ENCODE measurements at regions of chr16 and their contacts with region 1.

Region 1: GRCh38 chr16:85253084-85253941 is 141.0 kb upstream of the CIBAR2 start:
- DNase-seq: peak in 1 of 2 experiments; percentile 95
- H3K4me3 ChIP-seq: no peak overlapping the region
- H3K27ac ChIP-seq: peak overlapping the region; percentile 14; the same call in 1 of the 2 replicates
- H3K4me1 ChIP-seq: peaks cover 0 to 11% (median 2%) of the 10 kb centered on the region in 4 experiments; a peak in 4 of 7 replicates
- H3K27me3 ChIP-seq: no peaks in the 10 kb centered on the region
- CTCF ChIP-seq: peak; percentile 96 to 99 (median 98)
- EP300 ChIP-seq: no peak
- POLR2A ChIP-seq: no peak
- RAD21 ChIP-seq: peak; percentile 65 to 81

Region 2: GRCh38 chr16:84933774-84934631 is 319.3 kb before region 1 on chr16:
- CTCF ChIA-PET with region 1: no interaction called
- POLR2A ChIA-PET with region 1: no interaction called
- DNase-seq: no peak
- H3K4me3 ChIP-seq: no peak overlapping the region
- H3K27ac ChIP-seq: no peak overlapping the region
- H3K4me1 ChIP-seq: no peaks in the 10 kb centered on the region
- H3K27me3 ChIP-seq: no peaks in the 10 kb centered on the region
- CTCF ChIP-seq: no peak
- EP300 ChIP-seq: no peak
- POLR2A ChIP-seq: no peak
- RAD21 ChIP-seq: no peak

Region 3: GRCh38 chr16:85162478-85163277 is 90.6 kb before region 1 on chr16:
- CTCF ChIA-PET with region 1: interaction called, 12 read pairs
- POLR2A ChIA-PET with region 1: no interaction called
- DNase-seq: no peak
- H3K4me3 ChIP-seq: no peak overlapping the region
- H3K27ac ChIP-seq: no peak overlapping the region
- H3K4me1 ChIP-seq: peaks cover under 1 to 22% (median 18%) of the 10 kb centered on the region in 4 experiments
- H3K27me3 ChIP-seq: no peaks in the 10 kb centered on the region; a peak in 1 of 7 replicates
- CTCF ChIP-seq: no peak
- EP300 ChIP-seq: no peak
- POLR2A ChIP-seq: no peak
- RAD21 ChIP-seq: no peak

Region 4: DNA sequence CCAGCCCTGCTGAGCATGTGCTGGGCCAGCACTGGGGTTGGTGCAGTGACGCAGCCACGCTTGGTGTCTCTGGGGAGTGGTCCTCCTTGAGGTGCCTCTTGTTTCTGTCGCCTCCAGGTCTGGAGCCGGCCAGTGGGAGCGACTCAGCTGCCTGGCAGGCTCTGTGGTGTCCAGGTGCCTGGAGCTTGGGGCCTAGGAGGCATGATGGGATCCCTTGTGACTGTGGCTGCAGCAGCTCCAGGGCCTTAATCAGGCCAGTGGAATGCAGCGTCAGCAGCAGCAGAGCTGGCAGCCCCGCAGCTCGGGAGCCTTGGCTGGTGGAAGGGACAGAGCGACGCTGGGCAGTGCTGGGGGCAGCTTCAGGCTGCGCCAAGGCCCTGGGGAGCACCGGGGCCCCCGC is 66.3 kb before region 1 on chr16:
- CTCF ChIA-PET with region 1: interaction called, 19 read pairs
- POLR2A ChIA-PET with region 1: no interaction called
- DNase-seq: no peak
- H3K4me3 ChIP-seq: no peak overlapping the region
- H3K27ac ChIP-seq: no peak overlapping the region
- H3K4me1 ChIP-seq: peaks cover 0 to 3% (median under 1%) of the 10 kb centered on the region in 4 experiments; a peak in 5 of 7 replicates
- H3K27me3 ChIP-seq: no peaks in the 10 kb centered on the region
- CTCF ChIP-seq: no peak
- EP300 ChIP-seq: no peak
- POLR2A ChIP-seq: no peak
- RAD21 ChIP-seq: no peak

Region 5: GRCh38 chr16:85270374-85270773 is 17.1 kb after region 1 on chr16:
- CTCF ChIA-PET with region 1: interaction called, 66 read pairs
- POLR2A ChIA-PET with region 1: interaction called, 3 read pairs
- DNase-seq: no peak
- H3K4me3 ChIP-seq: no peak overlapping the region
- H3K27ac ChIP-seq: no peak overlapping the region
- H3K4me1 ChIP-seq: no peaks in the 10 kb centered on the region; a peak in 4 of 7 replicates
- H3K27me3 ChIP-seq: peaks cover 0 to 3% (median 0%) of the 10 kb centered on the region in 4 experiments; a peak in 2 of 7 replicates
- CTCF ChIP-seq: no peak
- EP300 ChIP-seq: no peak
- POLR2A ChIP-seq: no peak
- RAD21 ChIP-seq: no peak

Region 6: DNA sequence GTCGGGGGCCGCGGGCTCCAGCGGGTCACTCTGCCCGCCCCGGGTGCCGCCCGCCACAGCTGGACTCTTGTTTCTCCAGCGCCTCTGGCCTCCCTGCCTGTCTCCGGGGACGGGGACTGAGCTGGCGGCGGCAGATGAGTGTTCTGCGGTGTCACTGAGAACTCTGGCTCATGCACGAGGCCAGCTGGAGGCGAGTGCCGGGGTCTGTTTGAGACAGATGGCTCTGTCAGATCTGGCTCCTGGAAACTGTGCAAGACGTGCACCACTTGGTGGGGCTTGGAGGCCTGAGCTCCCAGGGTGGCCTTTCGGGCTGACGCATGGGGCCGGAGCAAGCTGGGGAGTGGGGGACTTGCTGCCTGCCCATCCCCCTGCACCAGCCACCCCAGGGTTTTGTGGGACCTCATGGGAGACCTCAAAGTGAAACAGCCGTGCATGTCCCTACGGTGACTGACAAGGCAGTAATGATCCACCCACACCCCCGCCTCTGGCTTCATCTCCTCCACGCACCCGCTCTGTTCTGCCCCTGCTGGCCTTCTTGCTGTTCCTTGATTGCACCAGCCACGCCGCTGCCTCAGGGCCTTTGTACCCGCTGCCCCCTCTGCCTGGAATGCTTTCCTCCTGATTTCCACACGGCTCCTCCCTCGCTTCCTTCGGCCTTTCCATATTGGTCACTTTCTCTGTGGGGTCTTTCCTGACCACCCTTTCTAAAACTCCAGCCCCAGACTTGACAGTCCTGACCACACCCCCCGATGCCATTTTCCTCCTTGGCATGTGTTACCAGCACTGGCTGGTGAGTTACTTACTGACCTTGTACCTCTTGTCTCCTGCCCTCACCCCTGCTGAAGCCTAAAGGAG is 33.9 kb after region 1 on chr16:
- CTCF ChIA-PET with region 1: interaction called, 25 read pairs
- POLR2A ChIA-PET with region 1: no interaction called
- DNase-seq: no peak
- H3K4me3 ChIP-seq: no peak overlapping the region
- H3K27ac ChIP-seq: no peak overlapping the region
- H3K4me1 ChIP-seq: peaks cover 0 to 12% (median 2%) of the 10 kb centered on the region in 4 experiments; a peak in 5 of 7 replicates
- H3K27me3 ChIP-seq: no peaks in the 10 kb centered on the region
- CTCF ChIP-seq: peak in 1 of 3 experiments; percentile 3; a peak in 1 of 4 replicates
- EP300 ChIP-seq: no peak
- POLR2A ChIP-seq: no peak
- RAD21 ChIP-seq: no peak

Region 7: GRCh38 chr16:85305996-85306792 is 52.9 kb after region 1 on chr16:
- CTCF ChIA-PET with region 1: interaction called, 18 read pairs
- POLR2A ChIA-PET with region 1: no interaction called
- DNase-seq: no peak
- H3K4me3 ChIP-seq: no peak overlapping the region
- H3K27ac ChIP-seq: no peak overlapping the region
- H3K4me1 ChIP-seq: peaks cover 3 to 27% (median 23%) of the 10 kb centered on the region in 4 experiments
- H3K27me3 ChIP-seq: 0 out of 7 replicates have a peak, but pooled peaks cover 0 to 4% (median 0%) of the 10 kb centered on the region in 4 experiments
- CTCF ChIP-seq: no peak
- EP300 ChIP-seq: no peak
- POLR2A ChIP-seq: no peak
- RAD21 ChIP-seq: no peak

Region 8: DNA sequence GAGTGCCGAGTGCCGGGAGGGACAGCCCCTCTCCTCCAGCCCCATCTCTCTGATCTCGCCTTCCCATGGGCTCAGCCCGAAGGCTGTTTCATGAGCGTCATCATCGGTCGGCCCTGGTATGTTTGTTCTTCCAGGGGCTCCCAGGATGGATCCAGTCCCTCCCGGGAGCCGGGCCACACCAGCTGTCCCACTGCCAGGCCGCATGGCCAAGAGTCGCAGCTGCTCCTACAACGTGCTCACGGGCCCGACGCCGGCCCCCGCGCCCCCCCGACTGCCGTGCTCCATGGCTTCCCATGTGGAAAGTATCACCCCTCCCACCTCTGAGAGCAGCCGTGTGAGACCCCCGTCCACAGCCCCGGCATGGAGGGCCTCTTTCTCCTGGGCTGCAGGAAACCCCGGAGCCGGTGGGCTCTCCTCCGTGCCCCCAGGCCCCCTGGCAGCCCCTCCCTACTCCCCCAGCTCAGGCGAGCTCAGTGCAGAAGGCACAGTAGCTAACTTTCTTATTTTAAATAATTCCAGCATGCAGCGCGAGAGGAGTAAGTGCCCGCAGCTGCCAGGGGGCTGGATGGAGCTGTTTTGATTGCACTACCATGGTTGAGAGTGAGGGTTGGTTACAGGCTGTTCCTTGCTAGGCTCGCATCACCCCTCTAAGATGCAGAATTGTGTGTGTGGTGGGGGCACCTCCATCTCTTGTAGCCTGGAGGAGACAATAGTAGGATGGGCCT is 333.2 kb after region 1 on chr16:
- CTCF ChIA-PET with region 1: no interaction called
- POLR2A ChIA-PET with region 1: no interaction called
- DNase-seq: no peak
- H3K4me3 ChIP-seq: no peak overlapping the region
- H3K27ac ChIP-seq: no peak overlapping the region
- H3K4me1 ChIP-seq: peaks cover 20 to 70% (median 63%) of the 10 kb centered on the region in 4 experiments
- H3K27me3 ChIP-seq: peaks cover 0 to 14% (median 12%) of the 10 kb centered on the region in 4 experiments; a peak in 4 of 7 replicates
- CTCF ChIP-seq: no peak
- EP300 ChIP-seq: no peak
- POLR2A ChIP-seq: no peak
- RAD21 ChIP-seq: no peak

Measured in H1 (cell line).